ENCODE measurements at regions of chr2 and their contacts with region 1.

Region 1: DNA sequence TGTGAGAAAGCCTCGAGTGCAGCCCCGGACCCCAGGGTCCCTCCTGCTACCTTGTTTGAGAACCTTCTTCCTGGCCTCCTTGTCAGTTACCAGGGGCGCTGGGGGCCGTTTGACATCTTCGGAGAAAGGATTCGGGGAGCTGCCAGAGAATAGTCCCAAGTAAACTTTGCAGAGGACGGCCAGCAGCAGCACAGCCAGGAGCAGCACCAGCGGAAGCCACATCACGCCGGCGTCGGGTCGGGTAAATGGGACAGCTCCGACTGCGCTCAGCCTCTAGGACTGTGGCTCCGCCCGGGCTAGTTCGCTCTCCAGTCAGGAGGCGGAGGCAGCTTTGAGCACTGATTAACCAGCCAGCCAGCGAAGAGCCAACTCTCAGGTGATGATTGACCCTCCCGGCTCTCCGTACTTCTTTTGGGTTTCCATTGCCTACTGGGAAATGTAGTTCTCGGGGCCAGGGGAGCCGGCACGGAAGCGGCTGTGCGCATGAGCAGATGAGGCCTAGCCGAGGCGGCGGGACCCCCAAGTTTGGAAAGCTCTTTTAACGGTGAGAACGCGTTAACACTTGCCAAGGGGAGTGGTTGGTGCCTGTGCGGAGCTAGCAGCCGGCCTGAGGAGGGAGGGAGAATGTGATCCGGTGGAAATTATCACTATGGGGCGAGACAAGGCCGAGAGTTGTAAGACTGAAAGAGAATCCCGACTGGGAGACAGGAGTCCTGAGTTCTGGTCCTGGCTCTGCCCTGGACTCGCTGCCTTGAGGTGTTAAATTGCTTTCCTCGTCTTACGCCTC is at the starts of genes ELMOD3 and RETSAT:
- DNase-seq: peak; percentile 97
- ATAC-seq: peak; percentile 99
- total RNA-seq, gene ELMOD3: 10.2 TPM
- total RNA-seq, gene RETSAT: 44.8 TPM

Region 2: DNA sequence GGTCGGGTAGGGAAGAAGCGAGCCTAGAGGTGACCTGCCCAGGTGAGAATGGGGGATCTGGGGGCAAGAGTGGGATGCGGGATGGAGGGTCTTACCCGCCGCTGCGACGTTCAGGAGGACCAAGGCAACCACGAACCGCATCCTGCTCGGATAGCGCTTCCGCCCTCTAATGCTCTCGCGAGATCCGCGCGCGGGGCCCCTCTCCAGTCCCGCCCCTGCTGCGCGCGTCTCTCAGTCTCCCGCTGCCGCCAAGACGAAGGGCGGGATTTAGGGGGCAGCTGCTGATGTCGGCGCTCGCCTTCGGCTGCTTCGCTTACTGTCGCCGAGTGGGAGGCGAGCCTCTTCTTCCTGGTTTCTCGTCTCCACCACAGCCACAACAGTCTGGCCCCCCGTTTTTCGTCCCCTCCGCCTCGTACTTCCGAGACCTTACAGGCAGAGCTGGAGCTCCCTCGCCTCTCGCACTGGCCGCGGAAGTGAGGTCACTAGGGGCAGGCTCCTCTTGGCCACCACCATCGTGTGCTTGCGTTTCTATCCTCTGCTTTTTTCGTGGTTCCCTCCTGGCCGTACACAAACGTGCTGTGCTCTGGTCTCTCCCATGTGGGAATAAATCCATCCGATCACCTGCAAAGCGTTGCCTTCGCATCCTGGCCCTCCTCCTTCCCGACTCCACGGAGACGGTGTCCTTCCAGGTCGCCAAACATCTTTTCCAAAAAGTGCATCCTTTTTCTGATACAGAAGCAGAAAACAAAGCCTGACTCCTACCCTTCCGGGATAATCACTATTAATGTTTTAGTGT is 26.5 kb before region 1 on chr2 and contains the start of gene TGOLN2:
- intact Hi-C with region 1: loop called (anchors 1 kb)
- DNase-seq: peak; percentile 98
- ATAC-seq: peak; percentile 99
- total RNA-seq, gene TGOLN2: 65.6 TPM

Region 3: GRCh38 chr2:85433511-85434089 is 79.1 kb after region 1 on chr2:
- intact Hi-C with region 1: no loop called
- DNase-seq: peak; percentile 92
- ATAC-seq: peak; percentile 82

Measured in Right ventricle myocardium inferior (tissue), 1 donor.